ENCODE measurements at regions of chr18 and their contacts with region 1.

Region 1: GRCh38 chr18:6414118-6414722 is 491 bp downstream of the L3MBTL4 start:
- DNase-seq: peak; percentile 60 to 68 (median 61)
- H3K4me3 ChIP-seq: peak overlapping the region; percentile 66 to 98 (median 86)
- H3K4me3 Mint-ChIP-seq: peak overlapping the region; percentile 83 to 91
- H3K27ac ChIP-seq: peak overlapping the region; percentile 41 to 82
- H3K27ac Mint-ChIP-seq: peak overlapping the region in 4 of 7 donors; percentile 61 to 82 (median 67)
- H3K4me1 ChIP-seq: peaks cover 22 to 26% of the 10 kb centered on the region in 2 donors
- H3K4me1 Mint-ChIP-seq: peaks cover 24% of the 10 kb centered on the region
- H3K27me3 ChIP-seq: peaks cover 0 to 8% of the 10 kb centered on the region in 2 donors
- H3K27me3 Mint-ChIP-seq: peaks cover 14 to 22% (median 19%) of the 10 kb centered on the region in 3 donors
- CTCF ChIP-seq: no peak

Region 2: GRCh38 chr18:5237723-5238370 is 1176.4 kb before region 1 on chr18:
- intact Hi-C with region 1: loop called in 1 of 2 experiments (anchors 5 kb)
- DNase-seq: peak; percentile 68 to 85 (median 79)
- H3K4me3 ChIP-seq: peak overlapping the region; percentile 66 to 80 (median 79)
- H3K4me3 Mint-ChIP-seq: peak overlapping the region; percentile 87 to 98
- H3K27ac ChIP-seq: peak overlapping the region; percentile 89 to 97
- H3K27ac Mint-ChIP-seq: peak overlapping the region; percentile 97 to 99 (median 98)
- H3K4me1 ChIP-seq: peaks cover 22 to 28% of the 10 kb centered on the region in 2 donors
- H3K4me1 Mint-ChIP-seq: peaks cover 34% of the 10 kb centered on the region
- H3K27me3 ChIP-seq: peaks cover 0 to 9% of the 10 kb centered on the region in 2 donors
- H3K27me3 Mint-ChIP-seq: peaks cover 8 to 16% (median 12%) of the 10 kb centered on the region in 3 donors
- CTCF ChIP-seq: peak; percentile 23

Region 3: GRCh38 chr18:6355789-6356589 is 58.2 kb before region 1 on chr18:
- intact Hi-C with region 1: no loop called
- DNase-seq: peak in 2 of 3 donors; percentile 0 to 7
- H3K4me3 ChIP-seq: no peak overlapping the region
- H3K4me3 Mint-ChIP-seq: no peak overlapping the region
- H3K27ac ChIP-seq: no peak overlapping the region
- H3K27ac Mint-ChIP-seq: no peak overlapping the region
- H3K4me1 ChIP-seq: no peaks in the 10 kb centered on the region
- H3K4me1 Mint-ChIP-seq: peaks cover 3% of the 10 kb centered on the region
- H3K27me3 ChIP-seq: no peaks in the 10 kb centered on the region
- H3K27me3 Mint-ChIP-seq: no peaks in the 10 kb centered on the region
- CTCF ChIP-seq: no peak

Region 4: DNA sequence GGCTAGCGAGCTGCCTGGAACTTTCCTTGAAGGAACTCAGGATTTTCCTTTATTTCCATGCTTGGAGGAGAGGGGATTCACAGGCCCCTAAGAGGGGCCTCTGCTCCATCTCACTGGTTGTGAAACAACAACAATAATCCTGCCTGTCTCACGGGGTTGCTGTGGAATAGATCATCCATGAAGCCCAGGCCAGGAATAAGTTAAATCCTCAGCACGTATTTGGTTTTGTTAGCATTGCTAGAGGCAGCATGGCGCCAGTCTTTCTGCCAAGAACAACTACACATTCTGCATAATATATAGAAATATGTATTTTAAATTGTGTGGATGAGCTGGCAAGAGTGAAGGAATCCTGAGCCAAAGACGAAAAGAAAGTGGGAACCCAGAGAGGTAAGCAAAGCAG is 81.3 kb after region 1 on chr18:
- intact Hi-C with region 1: no loop called
- DNase-seq: no peak
- H3K4me3 ChIP-seq: no peak overlapping the region
- H3K4me3 Mint-ChIP-seq: peak overlapping the region in 1 of 2 donors; percentile 37
- H3K27ac ChIP-seq: no peak overlapping the region
- H3K27ac Mint-ChIP-seq: no peak overlapping the region
- H3K4me1 ChIP-seq: no peaks in the 10 kb centered on the region
- H3K4me1 Mint-ChIP-seq: no peaks in the 10 kb centered on the region
- H3K27me3 ChIP-seq: no peaks in the 10 kb centered on the region
- H3K27me3 Mint-ChIP-seq: peaks cover 2 to 4% (median 4%) of the 10 kb centered on the region in 3 donors
- CTCF ChIP-seq: no peak